T-cell (primary cell): ENCODE measurements at regions of chr5 and their contacts with region 1.

Region 1: DNA sequence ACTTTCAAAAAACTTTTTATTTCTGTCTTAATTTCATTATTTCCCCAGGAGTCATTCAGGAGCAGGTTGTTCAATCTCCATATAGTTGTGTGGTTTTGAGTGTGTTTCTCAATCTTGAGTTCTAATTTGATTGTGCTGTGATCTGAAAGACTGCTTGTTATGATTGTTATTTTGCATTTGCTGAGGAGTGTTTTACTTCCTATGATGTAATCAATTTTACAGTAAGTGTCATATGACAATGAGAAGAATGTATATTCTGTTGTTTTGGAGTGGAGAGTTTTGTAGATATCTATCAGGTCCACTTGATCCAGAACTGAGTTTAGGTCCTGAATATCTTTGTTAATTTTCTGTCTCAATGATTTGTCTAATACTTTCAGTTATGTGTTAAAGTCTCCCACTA is 706.9 kb upstream of the CTNND2 start:
- DNase-seq: no peak
- ATAC-seq: no peak
- H3K4me3 ChIP-seq: no peak overlapping the region
- H3K4me3 Mint-ChIP-seq: no peak overlapping the region
- H3K27ac ChIP-seq: no peak overlapping the region
- H3K27ac Mint-ChIP-seq: no peak overlapping the region
- H3K4me1 ChIP-seq: no peaks in the 10 kb centered on the region
- H3K4me1 Mint-ChIP-seq: no peaks in the 10 kb centered on the region
- H3K27me3 ChIP-seq: no peaks in the 10 kb centered on the region
- H3K27me3 Mint-ChIP-seq: no peaks in the 10 kb centered on the region

Region 2: DNA sequence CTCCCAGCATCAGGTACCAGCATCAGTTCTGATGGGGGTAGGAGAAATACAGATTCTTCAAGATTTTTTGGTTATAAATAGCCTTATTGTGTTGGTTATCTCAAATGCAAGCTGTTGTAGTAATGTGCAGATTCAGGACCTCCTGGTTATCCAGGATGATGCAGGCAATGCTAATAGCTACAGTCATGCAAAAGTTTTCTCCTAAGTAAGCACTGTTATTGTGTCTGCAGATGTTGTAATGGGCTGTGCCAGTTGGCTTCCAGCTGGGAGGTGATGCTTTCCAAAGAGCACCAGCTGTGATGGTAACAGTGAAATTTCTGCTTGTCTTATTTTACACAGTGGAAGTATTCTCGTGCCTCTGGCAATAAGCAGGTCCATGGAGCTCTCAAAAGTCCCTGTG is 12.3 kb after region 1 on chr5:
- CTCF ChIA-PET with region 1: no interaction called
- POLR2A ChIA-PET with region 1: interaction called in 1 of 2 experiments, 13 read pairs
- DNase-seq: no peak
- ATAC-seq: no peak
- H3K4me3 ChIP-seq: no peak overlapping the region
- H3K4me3 Mint-ChIP-seq: no peak overlapping the region
- H3K27ac ChIP-seq: no peak overlapping the region
- H3K27ac Mint-ChIP-seq: no peak overlapping the region
- H3K4me1 ChIP-seq: no peaks in the 10 kb centered on the region
- H3K4me1 Mint-ChIP-seq: no peaks in the 10 kb centered on the region
- H3K27me3 ChIP-seq: no peaks in the 10 kb centered on the region
- H3K27me3 Mint-ChIP-seq: no peaks in the 10 kb centered on the region

Region 3: GRCh38 chr5:12870872-12871539 is 259.9 kb after region 1 on chr5:
- CTCF ChIA-PET with region 1: no interaction called
- POLR2A ChIA-PET with region 1: no interaction called
- DNase-seq: peak in 1 of 35 experiments; percentile 27
- ATAC-seq: peak in 2 of 4 experiments; percentile 50 to 68
- H3K4me3 ChIP-seq: no peak overlapping the region
- H3K4me3 Mint-ChIP-seq: no peak overlapping the region
- H3K27ac ChIP-seq: peak overlapping the region; percentile 60
- H3K27ac Mint-ChIP-seq: no peak overlapping the region
- H3K4me1 ChIP-seq: peaks cover 0 to 3% of the 10 kb centered on the region in 2 experiments
- H3K4me1 Mint-ChIP-seq: peaks cover 0 to 4% (median 3%) of the 10 kb centered on the region in 3 donors
- H3K27me3 ChIP-seq: no peaks in the 10 kb centered on the region
- H3K27me3 Mint-ChIP-seq: no peaks in the 10 kb centered on the region